GM13976 (cell line): ENCODE measurements at regions of chr13 and their contacts with region 1.

Region 1: DNA sequence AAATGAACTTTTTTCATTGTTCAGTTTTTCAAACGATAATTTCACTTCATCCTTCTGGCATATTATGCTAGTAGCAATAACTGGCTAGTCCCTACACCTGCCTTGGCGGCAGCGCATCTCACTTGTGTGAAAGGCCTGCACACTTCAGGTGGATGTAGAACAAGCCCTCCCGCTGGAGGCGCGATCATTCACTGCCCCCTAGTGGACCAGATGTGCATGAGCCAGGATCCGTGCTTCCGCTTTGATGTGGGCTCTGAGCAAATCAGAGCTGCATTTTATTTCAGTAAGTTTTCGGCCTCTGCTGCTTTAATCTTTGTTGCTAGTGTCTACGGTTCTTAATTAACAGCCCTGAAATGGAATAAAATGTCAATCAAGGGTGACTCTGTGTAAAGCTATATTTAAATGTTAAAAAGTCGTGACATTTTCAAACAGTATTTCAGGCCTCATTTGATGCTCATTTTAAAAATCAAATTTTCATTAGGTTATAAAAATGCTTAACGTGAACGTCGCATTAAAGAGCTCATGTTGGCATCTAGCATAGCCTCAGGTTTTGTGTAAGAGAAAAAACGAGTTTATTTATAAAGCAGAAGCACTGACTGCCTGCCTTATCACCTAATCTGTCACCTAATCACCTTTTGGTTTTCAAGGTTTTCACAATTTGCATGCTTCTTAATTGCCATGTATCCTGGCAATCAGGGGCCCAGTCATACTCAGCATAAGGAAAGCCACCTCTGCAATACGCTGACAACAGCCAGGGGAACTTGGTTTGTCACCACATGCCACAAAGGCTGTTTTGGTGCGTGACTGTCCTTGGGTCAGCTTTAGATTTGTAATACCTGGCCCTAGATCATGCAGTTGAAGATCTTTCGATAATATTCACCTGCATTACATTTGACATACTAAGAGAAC is 112.2 kb downstream of the TEX26 start:
- DNase-seq: peak; percentile 87
- CTCF ChIP-seq: peak; percentile 95

Region 2: DNA sequence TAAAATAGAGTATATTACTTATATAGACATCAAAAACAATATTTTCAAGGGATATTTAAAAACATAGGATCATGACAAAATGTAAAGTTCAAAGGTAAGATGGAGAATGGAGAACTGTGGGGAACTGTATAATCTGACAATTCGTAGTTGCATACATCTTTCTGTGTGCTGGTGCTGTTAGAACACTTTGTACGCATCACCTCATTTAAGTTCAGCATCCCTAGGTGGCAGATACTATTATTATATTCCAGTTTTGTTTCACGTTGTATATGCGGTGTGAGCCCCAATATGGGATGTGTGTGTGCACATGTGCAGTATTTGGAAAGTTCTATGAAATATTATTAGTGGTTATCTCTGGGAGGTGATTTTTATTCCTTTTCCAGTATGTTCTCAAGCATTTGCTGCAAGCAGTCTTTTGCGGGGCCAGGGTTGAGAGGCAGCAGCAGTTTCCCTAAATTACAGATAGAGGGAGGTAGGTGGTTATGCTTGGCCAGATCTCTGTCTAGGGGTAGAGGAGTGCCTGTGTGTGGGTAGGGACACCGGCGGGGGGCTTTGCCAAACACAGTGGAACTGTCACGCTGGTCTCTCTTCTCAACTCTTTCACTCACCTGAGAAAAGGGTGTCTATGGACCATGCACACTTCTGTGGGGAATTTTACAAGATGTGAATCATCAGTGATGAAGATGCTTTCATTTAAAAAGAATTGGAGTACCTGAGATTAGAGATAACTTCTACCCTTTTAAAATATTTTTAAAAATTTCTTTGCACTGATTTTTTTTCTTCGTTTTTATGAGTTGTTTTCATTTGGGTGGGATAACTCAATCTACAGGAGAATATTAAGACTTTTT is 364.9 kb before region 1 on chr13:
- in situ Hi-C with region 1: loop called (anchors 25 kb)
- DNase-seq: peak; percentile 56
- CTCF ChIP-seq: peak; percentile 46